Posterior vena cava (tissue), 2 donors: ENCODE measurements at regions of chr9 and their contacts with region 1.

Region 1: DNA sequence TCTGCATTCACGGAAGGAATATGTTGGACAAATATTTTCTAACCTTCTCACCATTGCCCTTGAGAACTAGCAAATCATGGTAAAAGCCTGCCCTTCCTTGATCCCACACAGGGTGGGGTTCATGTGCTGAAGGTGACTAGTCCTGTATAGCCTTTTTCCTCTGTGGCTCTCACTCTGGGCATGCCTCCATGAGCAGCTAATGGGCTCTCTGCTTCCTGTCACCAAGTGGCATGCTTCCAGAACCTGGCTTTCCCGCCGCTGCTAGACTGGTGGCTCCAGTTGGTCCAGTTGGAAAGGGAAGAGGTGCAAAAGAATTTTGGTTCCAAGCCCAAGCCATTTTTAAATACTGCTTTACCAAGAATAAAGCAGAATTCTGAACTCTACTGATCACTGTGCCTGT is 35.5 kb downstream of the FBXO10 start:
- DNase-seq: no peak

Region 2: GRCh38 chr9:36504156-36504555 is 1036.5 kb before region 1 on chr9:
- intact Hi-C with region 1: loop called in 1 of 2 experiments (anchors 5 kb)
- DNase-seq: no peak

Region 3: DNA sequence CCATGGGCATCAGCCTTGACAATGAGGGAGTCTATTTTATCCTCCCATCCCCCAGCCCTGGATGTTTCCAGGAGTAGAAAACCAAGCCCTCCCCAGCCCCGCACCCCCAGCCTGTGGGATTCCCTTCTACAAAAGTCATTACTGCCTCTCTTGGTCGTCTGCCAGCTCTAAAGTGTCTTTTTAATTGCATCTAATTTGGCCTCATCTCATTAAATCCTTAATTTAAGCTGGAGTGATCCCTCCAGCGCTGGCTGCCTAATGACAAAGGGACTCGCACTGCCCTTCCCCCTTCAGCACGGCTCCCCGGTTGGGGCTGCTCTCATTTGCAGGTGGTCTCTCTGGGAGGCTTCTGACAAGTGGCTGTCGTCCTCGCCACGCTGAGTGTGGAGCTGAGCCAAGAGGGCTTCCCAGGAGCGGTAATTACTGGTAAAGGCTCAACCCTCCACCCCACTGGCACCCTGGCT is 744.0 kb after region 1 on chr9:
- intact Hi-C with region 1: loop called in 1 of 2 experiments (anchors 2 kb)
- DNase-seq: peak; percentile 67